ENCODE measurements at regions of chr1 and their contacts with region 1.

Region 1: GRCh38 chr1:150925816-150926741 is at the start of gene SETDB1:
- DNase-seq: peak; percentile 97
- ATAC-seq: peak; percentile 93
- H3K4me3 ChIP-seq: peak within 1 kb of the TSS; percentile 82 to 96 (median 90)
- H3K4me3 Mint-ChIP-seq: peak within 1 kb of the TSS; percentile 98
- H3K27ac ChIP-seq: peak within 1 kb of the TSS; percentile 93 to 96
- H3K27ac Mint-ChIP-seq: peak within 1 kb of the TSS; percentile 98
- H3K4me1 ChIP-seq: peaks cover 17 to 19% of the 10 kb centered on the region in 2 donors
- H3K4me1 Mint-ChIP-seq: peaks cover 31% of the 10 kb centered on the region
- H3K27me3 ChIP-seq: no peaks in the 10 kb centered on the region
- H3K27me3 Mint-ChIP-seq: no peaks in the 10 kb centered on the region
- CTCF ChIP-seq: no peak
- total RNA-seq, gene SETDB1: 115 and 133 TPM in 2 replicates

Region 2: DNA sequence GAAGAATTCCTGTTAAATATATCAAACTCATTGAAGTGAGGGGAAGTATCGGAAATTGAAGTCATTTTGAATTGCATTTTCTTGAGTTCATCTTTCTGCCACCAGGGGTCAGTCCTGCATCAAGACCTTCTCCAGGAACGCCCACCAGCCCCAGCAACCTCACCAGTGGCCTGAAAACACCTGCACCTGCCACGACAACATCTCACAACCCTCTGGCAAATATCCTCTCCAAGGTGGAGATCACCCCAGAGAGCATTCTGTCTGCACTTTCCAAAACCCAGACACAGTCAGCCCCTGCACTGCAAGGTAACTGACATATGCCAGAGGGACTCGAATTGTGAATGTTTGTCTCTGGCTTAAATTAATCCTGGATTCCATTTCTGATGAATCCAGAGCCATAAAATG is 461.7 kb before region 1 on chr1:
- CTCF ChIA-PET with region 1: interaction called, 3 read pairs
- POLR2A ChIA-PET with region 1: no interaction called
- intact Hi-C with region 1: loop called (anchors 1 kb)
- DNase-seq: peak; percentile 83
- ATAC-seq: peak; percentile 74
- H3K4me3 ChIP-seq: no peak overlapping the region
- H3K4me3 Mint-ChIP-seq: no peak overlapping the region
- H3K27ac ChIP-seq: no peak overlapping the region
- H3K27ac Mint-ChIP-seq: peak overlapping the region; percentile 5
- H3K4me1 ChIP-seq: peaks cover 0 to 3% of the 10 kb centered on the region in 2 donors
- H3K4me1 Mint-ChIP-seq: peaks cover 4% of the 10 kb centered on the region
- H3K27me3 ChIP-seq: no peaks in the 10 kb centered on the region
- H3K27me3 Mint-ChIP-seq: no peaks in the 10 kb centered on the region
- CTCF ChIP-seq: peak; percentile 82

Region 3: GRCh38 chr1:150696590-150697524 is 229.2 kb before region 1 on chr1 and contains the start of gene GOLPH3L:
- CTCF ChIA-PET with region 1: interaction called, 5 read pairs
- POLR2A ChIA-PET with region 1: no interaction called
- intact Hi-C with region 1: loop called (anchors 2 kb)
- DNase-seq: peak; percentile 93
- ATAC-seq: peak; percentile 99
- H3K4me3 ChIP-seq: peak within 1 kb of the TSS; percentile 77 to 99 (median 90)
- H3K4me3 Mint-ChIP-seq: peak within 1 kb of the TSS; percentile 100
- H3K27ac ChIP-seq: peak within 1 kb of the TSS; percentile 66 to 78
- H3K27ac Mint-ChIP-seq: peak within 1 kb of the TSS; percentile 97
- H3K4me1 ChIP-seq: peaks cover 4 to 11% of the 10 kb centered on the region in 2 donors
- H3K4me1 Mint-ChIP-seq: peaks cover 19% of the 10 kb centered on the region
- H3K27me3 ChIP-seq: no peaks in the 10 kb centered on the region
- H3K27me3 Mint-ChIP-seq: no peaks in the 10 kb centered on the region
- CTCF ChIP-seq: no peak
- total RNA-seq, gene GOLPH3L: 22.1 and 25.3 TPM in 2 replicates

Region 4: GRCh38 chr1:150765296-150765976 is 160.6 kb before region 1 on chr1 and contains the start of gene CTSS:
- CTCF ChIA-PET with region 1: interaction called, 10 read pairs
- POLR2A ChIA-PET with region 1: no interaction called
- intact Hi-C with region 1: loop called (anchors 1 kb)
- DNase-seq: peak; percentile 86
- ATAC-seq: peak; percentile 87
- H3K4me3 ChIP-seq: peak within 1 kb of the TSS; percentile 62 to 99 (median 80)
- H3K4me3 Mint-ChIP-seq: peak within 1 kb of the TSS; percentile 96
- H3K27ac ChIP-seq: peak within 1 kb of the TSS; percentile 85 to 97
- H3K27ac Mint-ChIP-seq: peak within 1 kb of the TSS; percentile 97
- H3K4me1 ChIP-seq: peaks cover 36 to 40% of the 10 kb centered on the region in 2 donors
- H3K4me1 Mint-ChIP-seq: peaks cover 45% of the 10 kb centered on the region
- H3K27me3 ChIP-seq: no peaks in the 10 kb centered on the region
- H3K27me3 Mint-ChIP-seq: no peaks in the 10 kb centered on the region
- CTCF ChIP-seq: no peak
- total RNA-seq, gene CTSS: 221 and 241 TPM in 2 replicates

Region 5: DNA sequence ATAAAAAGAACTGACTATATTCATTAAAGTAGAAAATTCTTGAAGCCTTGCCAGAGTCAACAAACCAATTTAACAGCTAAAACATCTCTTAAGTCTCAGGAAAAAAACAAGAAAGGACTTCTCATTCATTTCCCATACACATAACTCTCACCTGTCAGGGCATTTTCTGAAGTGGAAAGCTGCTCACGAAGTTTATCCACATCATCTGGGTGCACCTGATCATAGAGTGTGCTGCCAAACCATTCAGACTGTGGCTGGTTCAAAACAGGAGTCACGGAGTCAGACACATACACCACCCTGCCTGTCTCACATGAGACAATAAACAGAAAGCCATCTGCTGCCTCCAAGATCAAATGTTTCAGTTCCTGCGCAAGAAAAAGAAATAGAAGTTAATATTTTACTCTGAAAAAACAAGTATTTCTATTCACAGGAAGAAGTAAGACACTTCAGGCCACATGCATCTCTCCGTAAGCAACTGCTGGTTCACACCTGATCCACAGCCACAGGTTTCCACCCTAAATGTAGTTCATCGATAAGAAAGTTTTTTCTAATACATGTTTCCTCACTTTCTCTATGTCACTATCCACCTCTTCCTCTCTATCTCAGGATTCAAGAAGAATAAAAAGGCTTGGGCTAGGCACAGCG is 89.8 kb before region 1 on chr1:
- CTCF ChIA-PET with region 1: interaction called, 11 read pairs
- POLR2A ChIA-PET with region 1: no interaction called
- intact Hi-C with region 1: no loop called
- DNase-seq: no peak
- ATAC-seq: no peak
- H3K4me3 ChIP-seq: no peak overlapping the region
- H3K4me3 Mint-ChIP-seq: no peak overlapping the region
- H3K27ac ChIP-seq: peak overlapping the region in 1 of 2 donors; percentile 9
- H3K27ac Mint-ChIP-seq: no peak overlapping the region
- H3K4me1 ChIP-seq: no peaks in the 10 kb centered on the region
- H3K4me1 Mint-ChIP-seq: no peaks in the 10 kb centered on the region
- H3K27me3 ChIP-seq: no peaks in the 10 kb centered on the region
- H3K27me3 Mint-ChIP-seq: no peaks in the 10 kb centered on the region
- CTCF ChIP-seq: no peak

Region 6: DNA sequence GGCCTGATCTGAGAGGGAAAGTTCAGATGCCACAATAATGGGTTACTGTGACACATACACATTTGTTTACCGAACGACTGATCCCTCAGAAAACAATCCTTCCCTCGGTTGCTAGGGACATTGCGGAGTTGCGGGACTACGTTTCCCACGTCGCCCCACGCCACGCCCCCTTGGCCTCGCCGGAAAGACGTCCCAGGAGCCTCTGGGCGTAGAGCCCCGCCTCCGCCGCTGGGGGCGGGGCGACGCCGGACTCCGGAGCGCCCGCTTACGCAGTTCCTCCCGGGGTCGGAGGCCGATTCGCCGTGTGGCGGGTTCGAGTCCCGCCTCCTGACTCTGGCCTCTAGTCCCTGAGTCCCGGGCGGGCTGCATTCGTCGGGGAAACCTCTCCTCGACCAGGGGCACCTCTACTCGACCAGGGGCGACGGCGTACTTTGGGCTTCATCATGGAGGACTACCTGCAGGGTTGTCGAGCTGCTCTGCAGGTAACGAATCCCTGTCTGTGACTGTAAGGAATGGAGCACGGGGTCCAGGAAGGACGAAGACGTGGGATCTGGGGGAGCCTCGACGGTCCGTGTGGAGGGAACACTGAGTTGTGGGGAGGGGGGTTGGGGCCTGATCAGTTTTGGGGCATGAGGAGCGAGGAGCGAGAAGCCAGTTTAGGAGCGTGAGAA is 82.2 kb after region 1 on chr1 and contains the start of gene PRUNE1:
- CTCF ChIA-PET with region 1: interaction called, 5 read pairs
- POLR2A ChIA-PET with region 1: no interaction called
- intact Hi-C with region 1: loop called (anchors 1 kb)
- DNase-seq: peak; percentile 98
- ATAC-seq: peak; percentile 97
- H3K4me3 ChIP-seq: peak within 1 kb of the TSS; percentile 74 to 98 (median 85)
- H3K4me3 Mint-ChIP-seq: peak within 1 kb of the TSS; percentile 90
- H3K27ac ChIP-seq: peak within 1 kb of the TSS; percentile 82 to 95
- H3K27ac Mint-ChIP-seq: peak within 1 kb of the TSS; percentile 94
- H3K4me1 ChIP-seq: peaks cover 39 to 55% of the 10 kb centered on the region in 2 donors
- H3K4me1 Mint-ChIP-seq: peaks cover 66% of the 10 kb centered on the region
- H3K27me3 ChIP-seq: no peaks in the 10 kb centered on the region
- H3K27me3 Mint-ChIP-seq: no peaks in the 10 kb centered on the region
- CTCF ChIP-seq: no peak
- total RNA-seq, gene PRUNE1: 20.8 and 21.3 TPM in 2 replicates

Measured in B cell (primary cell).